Activated CD4-positive, alpha-beta T cell treated with anti-CD3 and anti-CD28 coated beads, Interleukin-2, amount 10 ng/mL, durations not matched to agents 24 days and 14 days (primary cell): ENCODE measurements at regions of chr20 and their contacts with region 1.

Region 1: DNA sequence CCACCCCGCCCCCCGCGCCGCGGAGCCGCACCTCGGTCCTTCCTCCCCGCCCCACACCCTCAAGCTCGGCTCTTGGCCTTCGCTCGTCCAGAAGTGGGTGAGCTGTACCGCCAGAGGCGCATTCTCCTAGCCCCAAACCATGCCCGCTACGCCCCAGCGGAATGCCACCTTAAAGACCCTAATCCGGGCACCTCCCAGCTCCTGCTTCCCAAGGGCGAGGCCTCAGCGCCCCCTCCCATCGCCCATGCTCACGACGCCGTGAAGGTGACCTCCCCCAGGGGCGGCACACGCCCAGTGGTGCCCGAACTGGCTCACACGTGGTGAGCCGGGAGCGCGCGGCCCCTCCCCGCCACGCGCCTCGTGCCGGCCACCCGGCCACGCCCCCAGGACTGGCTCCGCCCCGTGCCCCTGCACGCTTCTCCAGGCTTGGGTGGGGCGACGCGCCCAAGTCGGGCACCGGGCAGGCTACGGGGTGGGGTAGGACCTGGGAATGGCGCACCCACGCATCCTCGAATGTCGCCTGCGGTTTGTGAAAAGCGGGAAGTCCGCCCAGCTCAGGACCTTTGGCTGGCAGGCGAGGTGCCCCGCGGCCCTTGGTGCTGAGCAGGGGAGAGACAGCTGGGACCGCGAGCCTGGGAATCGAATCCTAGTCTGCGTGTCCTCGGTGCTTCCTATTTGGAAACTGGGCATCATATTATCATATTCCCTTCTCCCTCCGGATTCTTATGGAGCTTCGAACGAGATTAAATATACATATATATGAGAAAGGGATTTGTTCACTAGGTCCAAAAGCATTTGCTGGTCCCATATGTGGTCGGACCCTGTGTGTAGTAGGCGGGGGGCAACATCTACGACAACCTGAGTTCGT is 941 bp upstream of the SOX12 start:
- DNase-seq: peak; percentile 98
- H3K4me3 Mint-ChIP-seq: peak overlapping the region; percentile 91
- H3K27ac Mint-ChIP-seq: peak overlapping the region; percentile 92
- H3K4me1 Mint-ChIP-seq: peaks cover 16% of the 10 kb centered on the region
- H3K27me3 Mint-ChIP-seq: peaks cover 6% of the 10 kb centered on the region

Region 2: DNA sequence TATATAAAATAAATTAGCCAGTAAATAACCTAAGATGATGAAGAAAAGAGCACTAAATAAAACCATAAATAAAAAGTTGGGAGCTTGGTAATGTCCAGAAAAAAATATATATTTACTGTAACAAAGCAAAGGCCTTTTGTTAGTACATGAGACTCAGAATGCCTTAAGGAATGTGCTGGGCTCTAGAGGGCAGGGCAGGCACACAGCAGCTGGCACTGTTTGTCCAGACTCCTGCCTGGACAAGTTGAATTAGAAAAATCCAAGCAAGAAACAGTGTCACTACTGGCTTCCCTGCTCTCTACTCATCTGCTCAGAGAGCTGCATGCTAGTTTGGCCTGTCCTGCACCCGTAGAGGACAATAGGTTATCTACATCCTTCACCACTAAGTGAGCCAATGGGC is 88.5 kb before region 1 on chr20:
- intact Hi-C with region 1: loop called (anchors 1 kb)
- DNase-seq: peak; percentile 50
- H3K4me3 Mint-ChIP-seq: no peak overlapping the region
- H3K27ac Mint-ChIP-seq: no peak overlapping the region
- H3K4me1 Mint-ChIP-seq: peaks cover 19% of the 10 kb centered on the region
- H3K27me3 Mint-ChIP-seq: no peaks in the 10 kb centered on the region

Region 3: DNA sequence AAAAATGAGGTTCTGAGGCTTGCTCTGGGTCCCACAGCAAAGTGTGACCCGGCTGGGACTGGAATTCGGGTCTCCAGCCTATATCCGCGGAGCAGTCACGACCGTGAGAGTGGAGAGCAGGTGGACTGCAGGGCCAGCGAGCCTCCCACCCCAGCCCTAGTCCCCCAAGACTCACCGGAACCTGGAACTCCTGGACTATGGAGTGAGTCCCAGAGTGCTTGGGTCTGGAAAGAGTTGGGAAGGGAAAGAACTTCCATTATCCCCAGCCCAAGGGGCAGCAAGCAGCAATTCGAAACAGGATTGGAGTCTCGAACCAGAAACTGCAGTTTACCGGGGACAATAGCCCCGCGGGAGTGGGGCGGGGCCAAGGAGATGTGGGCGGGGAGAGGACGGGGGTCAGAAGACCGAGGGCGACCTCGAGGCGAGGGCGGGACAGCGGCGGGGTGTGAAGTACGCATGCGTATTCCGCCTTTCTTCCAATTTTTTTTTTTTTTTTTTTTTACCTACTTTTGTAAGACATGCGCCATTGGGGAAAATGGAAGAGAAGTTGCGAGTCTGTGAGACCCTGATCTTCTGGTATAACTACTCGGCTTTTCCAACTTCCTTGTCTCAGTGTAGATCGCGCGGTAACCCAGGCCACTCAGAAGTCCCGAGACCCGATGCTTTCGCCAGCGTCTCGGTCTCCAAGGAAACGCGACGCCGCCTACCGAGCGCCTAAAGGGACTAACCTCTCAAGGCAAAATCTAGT is 34.2 kb before region 1 on chr20 and contains the start of gene C20orf96:
- intact Hi-C with region 1: loop called (anchors 1 kb)
- DNase-seq: peak; percentile 97
- H3K4me3 Mint-ChIP-seq: no peak within 1 kb of the TSS
- H3K27ac Mint-ChIP-seq: no peak within 1 kb of the TSS
- H3K4me1 Mint-ChIP-seq: peaks cover 25% of the 10 kb centered on the region
- H3K27me3 Mint-ChIP-seq: no peaks in the 10 kb centered on the region
- total RNA-seq, gene C20orf96: 5.7 and 6.7 TPM in 2 replicates

Region 4: GRCh38 chr20:297098-297924 is 27.1 kb before region 1 on chr20 and contains the start of gene ZCCHC3:
- intact Hi-C with region 1: loop called (anchors 1 kb)
- DNase-seq: peak; percentile 96
- H3K4me3 Mint-ChIP-seq: peak within 1 kb of the TSS; percentile 98
- H3K27ac Mint-ChIP-seq: peak within 1 kb of the TSS; percentile 100
- H3K4me1 Mint-ChIP-seq: peaks cover 40% of the 10 kb centered on the region
- H3K27me3 Mint-ChIP-seq: peaks cover 1% of the 10 kb centered on the region
- total RNA-seq, gene ZCCHC3: 23.7 and 24.6 TPM in 2 replicates

Region 5: DNA sequence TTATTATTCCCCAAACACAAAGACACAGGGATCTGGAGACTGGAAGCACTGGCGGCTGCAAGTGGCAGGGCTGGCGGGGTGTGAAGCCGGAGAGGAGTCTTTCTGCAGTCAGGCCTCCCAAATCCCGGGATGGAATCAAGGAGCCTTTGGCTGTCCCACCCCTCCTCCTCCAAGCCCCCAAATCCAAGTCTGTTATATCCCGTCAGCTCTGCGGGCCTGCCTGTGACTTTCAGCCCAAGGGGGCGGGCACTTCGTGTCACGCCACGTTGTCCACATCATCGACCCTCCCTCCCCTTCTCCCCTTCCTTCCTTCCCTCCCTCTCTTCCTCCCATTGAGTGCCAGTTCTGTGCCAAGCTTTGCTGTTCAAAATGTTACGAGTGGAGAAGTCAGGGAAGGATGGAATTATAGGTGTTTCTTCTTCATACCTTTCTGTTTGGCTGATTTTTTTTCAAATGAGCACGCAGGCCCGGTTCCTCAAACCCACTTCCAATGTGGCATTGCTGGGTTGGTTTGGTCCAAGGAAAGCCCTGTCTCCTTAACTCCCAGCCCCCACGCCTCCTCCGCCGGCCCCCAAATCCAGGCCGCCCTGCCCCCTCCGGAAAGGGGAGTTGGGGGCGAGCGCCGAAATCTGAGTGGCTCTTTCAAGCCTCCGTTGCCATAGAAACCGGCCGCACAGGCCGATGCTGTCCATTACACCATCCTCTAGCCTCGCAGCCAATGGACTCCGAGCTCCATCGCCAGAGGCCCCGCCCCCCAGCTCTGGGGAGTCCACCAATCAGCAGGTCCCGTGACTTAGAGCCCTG is 14.4 kb before region 1 on chr20:
- intact Hi-C with region 1: loop called (anchors 2 kb)
- DNase-seq: peak; percentile 95
- H3K4me3 Mint-ChIP-seq: peak overlapping the region; percentile 81
- H3K27ac Mint-ChIP-seq: peak overlapping the region; percentile 89
- H3K4me1 Mint-ChIP-seq: peaks cover 10% of the 10 kb centered on the region
- H3K27me3 Mint-ChIP-seq: no peaks in the 10 kb centered on the region

Region 6: GRCh38 chr20:347640-348484 is 23.5 kb after region 1 on chr20:
- intact Hi-C with region 1: loop called (anchors 2 kb)
- DNase-seq: peak; percentile 89
- H3K4me3 Mint-ChIP-seq: peak overlapping the region; percentile 90
- H3K27ac Mint-ChIP-seq: peak overlapping the region; percentile 74
- H3K4me1 Mint-ChIP-seq: peaks cover 18% of the 10 kb centered on the region
- H3K27me3 Mint-ChIP-seq: peaks cover 16% of the 10 kb centered on the region

Region 7: DNA sequence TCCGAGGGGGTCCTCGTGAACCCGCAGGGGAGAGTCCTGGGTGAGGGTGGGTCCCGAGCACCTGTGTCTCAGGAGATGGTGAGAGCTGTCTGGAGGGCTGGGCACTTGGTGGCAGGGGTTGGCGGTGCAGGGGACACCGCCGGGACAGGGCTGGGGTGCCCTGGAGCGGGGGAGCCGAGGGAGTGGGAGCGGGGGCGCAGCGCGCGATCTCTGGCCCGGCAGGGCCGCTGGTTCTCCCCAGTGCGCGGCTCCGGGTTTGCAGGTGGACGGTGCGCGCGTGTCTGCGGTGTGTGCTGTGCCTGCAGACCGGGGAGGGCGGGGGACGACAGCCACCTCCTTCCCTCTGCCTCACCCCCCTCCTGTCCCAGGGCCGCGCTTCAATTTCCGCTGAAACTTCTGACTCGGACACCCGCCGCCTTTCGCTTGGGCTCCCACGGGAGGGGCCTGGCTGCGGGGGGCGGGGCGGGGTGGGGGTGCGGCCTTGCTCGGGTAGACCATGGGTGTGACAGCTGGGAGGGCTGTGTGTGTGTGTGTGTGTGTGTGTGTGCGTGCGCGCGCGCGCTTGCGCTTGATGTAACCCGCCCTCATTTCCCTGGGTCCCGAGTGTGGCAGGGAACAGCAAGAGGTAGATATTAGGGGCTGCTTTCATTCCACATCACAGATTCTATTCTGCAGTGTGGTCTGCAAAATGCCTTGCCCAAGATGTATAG is 57.3 kb after region 1 on chr20:
- intact Hi-C with region 1: loop called (anchors 2 kb)
- DNase-seq: peak; percentile 94
- H3K4me3 Mint-ChIP-seq: peak overlapping the region; percentile 85
- H3K27ac Mint-ChIP-seq: peak overlapping the region; percentile 85
- H3K4me1 Mint-ChIP-seq: peaks cover 30% of the 10 kb centered on the region
- H3K27me3 Mint-ChIP-seq: no peaks in the 10 kb centered on the region

Region 8: GRCh38 chr20:496126-496696 is 171.8 kb after region 1 on chr20:
- intact Hi-C with region 1: no loop called
- DNase-seq: no peak
- H3K4me3 Mint-ChIP-seq: no peak overlapping the region
- H3K27ac Mint-ChIP-seq: no peak overlapping the region
- H3K4me1 Mint-ChIP-seq: no peaks in the 10 kb centered on the region
- H3K27me3 Mint-ChIP-seq: no peaks in the 10 kb centered on the region